ENCODE measurements at regions of chr2 and their contacts with region 1.

Region 1: DNA sequence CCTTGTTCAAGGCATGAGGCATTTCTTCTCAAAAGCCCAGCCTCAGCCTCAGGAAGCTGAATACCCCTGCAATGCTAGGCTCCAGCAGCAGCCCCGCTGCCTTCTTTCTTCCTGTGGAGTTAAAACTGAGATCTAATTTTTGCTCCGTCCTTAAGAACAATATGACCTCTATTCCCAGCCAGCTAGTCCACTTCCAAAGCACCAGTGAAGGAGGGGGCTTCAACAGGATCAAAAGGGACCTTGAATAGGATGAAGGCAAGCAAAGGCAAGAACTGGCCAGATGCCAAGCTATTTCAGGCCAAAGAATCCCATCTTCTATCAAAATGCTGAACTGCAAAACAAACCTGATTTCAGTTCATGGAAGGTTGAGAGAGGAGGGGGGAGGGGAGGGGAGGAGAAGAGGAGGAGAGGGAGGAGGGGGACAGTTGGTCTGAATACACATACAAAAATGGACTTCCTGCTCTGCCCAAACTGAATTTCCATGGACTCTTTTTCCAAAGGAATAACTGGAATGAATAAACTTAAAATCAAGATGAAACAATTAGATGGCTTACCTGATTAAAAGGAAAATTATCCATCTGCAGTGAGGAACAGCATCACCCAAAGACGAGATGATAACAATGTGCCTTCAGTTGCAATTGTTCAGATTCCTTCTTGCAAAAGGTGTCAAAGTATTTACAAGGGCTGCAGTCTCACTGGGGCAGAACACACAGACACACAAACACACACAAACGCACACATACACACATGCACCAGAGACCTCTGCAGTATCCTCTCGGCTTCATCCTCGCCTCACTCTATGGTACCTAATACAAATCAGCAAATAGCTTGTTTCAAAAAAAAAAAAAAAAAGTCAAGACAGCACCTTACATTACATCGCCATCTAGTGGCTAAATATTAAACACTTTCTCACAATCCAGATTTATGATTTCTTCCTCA is at the start of gene SCN1A:
- DNase-seq: peak; percentile 7
- H3K4me3 ChIP-seq: no peak within 1 kb of the TSS; the same call in 1 of the 2 replicates
- H3K27ac ChIP-seq: no peak within 1 kb of the TSS
- H3K27me3 ChIP-seq: peaks cover 5% of the 10 kb centered on the region
- CTCF ChIP-seq: peak; percentile 71
- polyA plus RNA-seq, gene SCN1A: not detected in 2 replicates

Region 2: DNA sequence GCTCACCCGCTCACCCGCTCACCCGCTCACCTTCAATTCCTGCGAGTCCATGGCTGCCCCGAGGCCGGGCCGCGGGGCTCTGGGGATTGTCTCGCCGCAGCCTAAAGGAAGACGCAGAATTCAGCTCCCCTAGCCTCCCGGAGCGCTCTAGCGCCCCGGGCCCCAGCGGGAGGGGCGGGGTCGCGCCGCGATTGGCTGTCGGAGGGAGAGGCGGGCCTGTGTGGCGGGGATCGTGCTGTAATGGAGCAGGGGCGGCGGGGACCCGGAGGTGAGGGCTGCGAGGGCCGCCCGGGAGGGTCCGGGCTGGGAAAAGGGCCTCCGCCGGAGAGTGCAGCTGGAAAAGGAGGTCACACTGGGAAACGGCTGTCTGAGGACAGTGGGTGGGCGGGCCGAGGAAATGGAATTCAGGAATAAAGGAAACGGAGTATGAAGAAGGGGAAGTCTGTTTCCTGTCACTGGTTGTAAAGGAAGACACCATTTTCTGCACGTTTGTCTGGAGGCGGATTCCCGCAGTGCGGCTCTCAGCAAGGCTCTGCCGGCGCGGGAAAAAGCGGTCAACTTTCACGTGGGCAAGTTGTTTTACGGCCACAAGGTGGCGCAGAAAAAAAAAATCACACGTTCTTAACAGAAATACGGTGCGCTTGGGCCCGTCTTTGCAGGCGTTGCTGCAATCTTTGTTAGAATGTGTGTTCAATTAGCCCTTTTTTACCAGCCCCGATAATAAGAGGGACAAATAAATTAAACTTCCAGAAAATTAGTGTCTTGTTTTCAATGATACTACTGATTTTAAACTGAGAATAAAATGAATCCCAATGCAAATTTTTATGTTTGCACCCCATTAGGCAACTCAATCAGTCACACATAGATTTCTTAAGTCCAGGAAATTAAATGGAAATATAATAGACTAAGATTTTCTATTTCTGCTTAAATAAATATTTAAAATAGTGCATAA is 173.6 kb before region 1 on chr2 and contains the start of gene TTC21B:
- CTCF ChIA-PET with region 1: interaction called, 123 read pairs
- POLR2A ChIA-PET with region 1: interaction called, 7 read pairs
- DNase-seq: peak; percentile 87
- H3K4me3 ChIP-seq: peak within 1 kb of the TSS; percentile 74
- H3K27ac ChIP-seq: peak within 1 kb of the TSS; percentile 83
- H3K27me3 ChIP-seq: no peaks in the 10 kb centered on the region
- CTCF ChIP-seq: peak; percentile 84
- polyA plus RNA-seq, gene TTC21B: 11.1 and 12.1 TPM in 2 replicates

Region 3: GRCh38 chr2:166057370-166058164 is 69.9 kb before region 1 on chr2:
- CTCF ChIA-PET with region 1: interaction called, 332 read pairs
- POLR2A ChIA-PET with region 1: interaction called, 5 read pairs
- DNase-seq: no peak
- H3K4me3 ChIP-seq: no peak overlapping the region
- H3K27ac ChIP-seq: no peak overlapping the region
- H3K27me3 ChIP-seq: no peaks in the 10 kb centered on the region
- CTCF ChIP-seq: peak; percentile 64

Region 4: GRCh38 chr2:166074430-166074829 is 53.1 kb before region 1 on chr2:
- CTCF ChIA-PET with region 1: interaction called, 13 read pairs
- POLR2A ChIA-PET with region 1: no interaction called
- DNase-seq: no peak
- H3K4me3 ChIP-seq: no peak overlapping the region
- H3K27ac ChIP-seq: no peak overlapping the region
- H3K27me3 ChIP-seq: no peaks in the 10 kb centered on the region
- CTCF ChIP-seq: no peak

Region 5: DNA sequence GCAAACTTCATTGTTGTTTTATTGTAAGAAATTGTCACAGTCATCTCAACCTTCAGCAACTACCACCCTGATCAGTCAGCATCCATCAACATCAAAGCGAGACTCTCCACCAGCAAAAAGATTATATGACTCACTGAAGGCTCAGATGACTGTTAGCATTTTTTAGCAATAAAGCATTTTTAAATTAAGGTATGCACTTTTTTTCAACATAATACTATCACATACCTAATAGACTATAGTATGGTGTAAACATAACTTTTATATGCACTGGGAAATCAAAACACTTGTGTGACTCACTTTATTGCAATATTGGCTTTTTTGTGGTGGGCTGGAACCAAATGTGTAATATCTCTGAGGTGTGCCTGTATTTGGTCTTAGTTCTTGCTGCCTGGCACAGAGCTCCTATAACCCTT is 15.3 kb before region 1 on chr2:
- CTCF ChIA-PET with region 1: interaction called, 60 read pairs
- POLR2A ChIA-PET with region 1: no interaction called
- DNase-seq: no peak
- H3K4me3 ChIP-seq: no peak overlapping the region
- H3K27ac ChIP-seq: no peak overlapping the region
- H3K27me3 ChIP-seq: no peaks in the 10 kb centered on the region
- CTCF ChIP-seq: no peak

Region 6: DNA sequence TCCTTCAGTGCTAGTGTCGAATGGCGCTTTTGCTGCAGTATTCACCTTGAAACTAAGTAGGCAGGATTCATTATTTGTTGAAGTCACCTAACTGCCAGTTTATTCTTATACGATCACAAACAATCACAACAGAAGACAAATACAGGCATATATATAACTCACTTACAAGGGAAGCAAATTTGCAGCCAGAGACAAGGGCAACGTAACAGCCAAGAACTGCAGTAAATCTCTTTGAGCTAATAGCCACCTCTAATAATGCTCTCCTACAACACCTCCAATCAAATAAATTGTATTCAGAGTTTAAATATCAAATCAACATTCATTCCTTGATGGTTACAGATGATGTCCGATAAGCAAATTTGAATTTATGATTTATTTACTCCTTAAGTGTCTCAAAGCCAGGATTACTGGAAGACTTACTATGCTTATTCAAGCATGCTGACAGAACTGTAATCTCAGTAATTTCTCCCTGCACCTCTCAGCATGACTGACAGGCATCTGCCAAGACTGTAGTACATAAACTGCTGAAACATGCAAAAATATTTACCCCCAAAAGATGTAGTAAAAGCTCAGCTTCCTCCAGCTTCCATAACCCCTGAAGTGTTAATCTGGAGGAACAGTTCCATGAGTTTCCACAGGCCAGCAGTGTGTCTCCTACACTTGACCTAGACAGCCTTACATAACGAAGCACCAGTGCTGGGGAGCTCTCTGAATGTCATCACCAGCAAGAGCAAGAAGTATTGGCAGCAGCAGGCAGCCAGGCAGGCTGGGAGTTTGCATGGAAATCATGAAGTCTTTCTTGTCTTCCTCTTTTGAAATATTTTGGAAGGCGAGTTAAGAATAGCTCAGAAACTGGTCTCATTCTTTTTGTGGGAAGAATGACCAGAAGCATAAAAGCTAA is 21.3 kb after region 1 on chr2:
- CTCF ChIA-PET with region 1: interaction called, 47 read pairs
- POLR2A ChIA-PET with region 1: no interaction called
- DNase-seq: no peak
- H3K4me3 ChIP-seq: no peak overlapping the region
- H3K27ac ChIP-seq: no peak overlapping the region
- H3K27me3 ChIP-seq: no peaks in the 10 kb centered on the region
- CTCF ChIP-seq: no peak

Region 7: GRCh38 chr2:166180951-166181812 is 53.7 kb after region 1 on chr2:
- CTCF ChIA-PET with region 1: interaction called, 15 read pairs
- POLR2A ChIA-PET with region 1: no interaction called
- DNase-seq: no peak
- H3K4me3 ChIP-seq: no peak overlapping the region
- H3K27ac ChIP-seq: no peak overlapping the region
- H3K27me3 ChIP-seq: no peaks in the 10 kb centered on the region
- CTCF ChIP-seq: peak; percentile 61

Region 8: GRCh38 chr2:166211079-166211478 is 83.6 kb after region 1 on chr2:
- CTCF ChIA-PET with region 1: no interaction called
- POLR2A ChIA-PET with region 1: no interaction called
- DNase-seq: no peak
- H3K4me3 ChIP-seq: no peak overlapping the region
- H3K27ac ChIP-seq: no peak overlapping the region
- H3K27me3 ChIP-seq: no peaks in the 10 kb centered on the region
- CTCF ChIP-seq: no peak

Region 9: DNA sequence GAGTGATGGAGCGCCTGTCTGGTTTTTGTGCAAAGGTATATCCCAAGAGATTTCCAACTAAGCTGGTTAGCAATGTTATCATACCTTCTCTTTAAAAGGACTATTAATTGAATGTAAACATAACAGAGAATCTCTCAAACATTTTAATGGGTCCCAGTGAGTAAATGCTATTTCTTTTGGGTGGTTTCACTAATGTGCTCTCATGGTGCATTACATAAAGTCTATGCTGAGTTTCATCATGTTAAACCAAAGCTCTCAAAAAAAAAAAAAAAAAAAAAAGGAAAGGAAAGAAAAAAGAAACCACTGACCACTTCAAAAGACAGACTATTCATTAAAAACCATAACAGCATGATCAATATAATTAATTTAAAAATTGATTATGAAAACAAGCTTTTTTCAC is 119.4 kb after region 1 on chr2:
- CTCF ChIA-PET with region 1: no interaction called
- POLR2A ChIA-PET with region 1: no interaction called
- DNase-seq: no peak
- H3K4me3 ChIP-seq: no peak overlapping the region
- H3K27ac ChIP-seq: no peak overlapping the region
- H3K27me3 ChIP-seq: no peaks in the 10 kb centered on the region
- CTCF ChIP-seq: no peak

Measured in AG04450 (cell line).